AG04450 (cell line): ENCODE measurements at regions of chr7 and their contacts with region 1.

Region 1: DNA sequence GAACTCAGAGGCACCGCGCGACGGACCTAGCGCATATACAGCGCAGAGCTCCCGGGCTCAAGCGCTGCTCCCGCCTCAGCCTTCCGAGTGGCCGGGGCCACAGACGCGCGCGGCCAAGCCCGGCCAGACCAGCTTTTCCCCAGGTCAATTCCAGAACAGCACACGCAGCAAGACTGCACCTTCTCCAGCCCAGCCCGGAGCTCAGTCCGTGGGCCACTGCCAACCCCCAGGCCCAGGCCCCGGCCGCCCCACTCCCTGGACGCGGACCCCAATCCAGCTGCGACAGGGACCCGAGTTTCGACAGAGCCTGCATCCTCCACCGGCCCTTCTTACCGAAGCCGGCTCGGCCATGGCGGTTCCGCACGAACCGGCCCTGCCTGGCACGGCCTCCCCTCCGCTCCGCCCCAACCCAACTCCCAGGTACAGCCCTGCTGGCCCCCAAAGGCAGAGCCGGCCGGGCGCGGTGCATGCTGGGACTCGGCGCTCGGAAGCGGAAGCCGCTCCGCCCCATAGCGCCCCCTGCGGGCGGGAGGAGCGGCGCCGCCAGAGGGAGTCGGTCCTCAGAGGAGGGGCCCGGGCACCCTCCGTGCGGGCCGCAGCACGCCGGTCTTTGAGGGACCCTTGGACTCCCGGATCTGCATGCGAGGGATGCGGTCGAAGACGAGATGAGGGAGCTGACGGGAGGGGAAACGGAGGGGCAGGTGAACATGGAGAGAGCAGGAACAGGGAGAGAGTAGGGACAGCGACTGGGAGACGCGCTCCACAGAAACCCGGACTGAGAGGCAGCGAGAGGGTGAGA is at the start of gene ZNF425:
- DNase-seq: peak; percentile 72
- H3K4me3 ChIP-seq: peak within 1 kb of the TSS; percentile 91
- H3K27ac ChIP-seq: peak within 1 kb of the TSS; percentile 82
- H3K27me3 ChIP-seq: no peaks in the 10 kb centered on the region
- CTCF ChIP-seq: peak; percentile 90
- polyA plus RNA-seq, gene ZNF425: 1.8 and 2.1 TPM in 2 replicates

Region 2: DNA sequence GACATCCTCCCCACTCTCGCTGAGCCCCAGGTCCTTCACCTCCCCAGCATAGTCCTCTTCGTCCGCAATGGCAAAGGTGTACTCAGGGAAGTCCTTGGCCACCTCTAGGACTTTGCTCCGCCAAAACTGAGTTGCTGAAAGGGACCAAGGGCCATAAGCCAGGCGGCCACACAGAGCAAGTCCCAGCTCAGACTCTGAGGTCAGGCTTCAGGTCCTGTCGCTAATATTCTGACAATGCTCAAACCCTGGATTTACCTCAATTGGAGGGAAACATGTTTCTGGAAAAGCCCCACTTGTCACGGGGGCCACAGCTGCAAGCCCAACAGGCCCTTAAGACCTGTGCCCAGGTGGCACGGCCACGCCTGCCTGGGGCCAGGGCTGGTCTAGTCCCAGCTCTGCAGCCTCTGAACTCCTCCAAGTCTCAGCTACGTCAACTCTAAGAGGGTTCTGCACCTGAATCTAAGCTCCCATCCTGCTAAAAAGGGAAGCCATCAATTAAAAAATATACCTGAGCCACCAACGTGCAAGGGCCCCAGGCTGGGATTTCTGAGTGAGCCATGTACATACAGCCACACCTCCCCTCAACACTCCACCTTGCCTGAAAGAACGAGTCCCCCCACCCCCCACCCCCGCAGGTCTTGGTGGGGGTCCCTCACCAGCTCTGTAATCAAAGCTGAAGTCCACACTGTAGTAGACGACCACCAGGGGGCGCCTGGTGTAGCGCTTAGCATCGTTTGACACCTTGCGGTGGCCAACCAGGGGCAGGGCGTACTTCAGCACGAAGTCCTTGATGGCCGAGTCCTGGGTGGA is 120.6 kb before region 1 on chr7:
- CTCF ChIA-PET with region 1: interaction called, 10 read pairs
- POLR2A ChIA-PET with region 1: interaction called, 3 read pairs
- DNase-seq: no peak
- H3K4me3 ChIP-seq: no peak overlapping the region
- H3K27ac ChIP-seq: no peak overlapping the region
- H3K27me3 ChIP-seq: no peaks in the 10 kb centered on the region
- CTCF ChIP-seq: peak; percentile 74

Region 3: DNA sequence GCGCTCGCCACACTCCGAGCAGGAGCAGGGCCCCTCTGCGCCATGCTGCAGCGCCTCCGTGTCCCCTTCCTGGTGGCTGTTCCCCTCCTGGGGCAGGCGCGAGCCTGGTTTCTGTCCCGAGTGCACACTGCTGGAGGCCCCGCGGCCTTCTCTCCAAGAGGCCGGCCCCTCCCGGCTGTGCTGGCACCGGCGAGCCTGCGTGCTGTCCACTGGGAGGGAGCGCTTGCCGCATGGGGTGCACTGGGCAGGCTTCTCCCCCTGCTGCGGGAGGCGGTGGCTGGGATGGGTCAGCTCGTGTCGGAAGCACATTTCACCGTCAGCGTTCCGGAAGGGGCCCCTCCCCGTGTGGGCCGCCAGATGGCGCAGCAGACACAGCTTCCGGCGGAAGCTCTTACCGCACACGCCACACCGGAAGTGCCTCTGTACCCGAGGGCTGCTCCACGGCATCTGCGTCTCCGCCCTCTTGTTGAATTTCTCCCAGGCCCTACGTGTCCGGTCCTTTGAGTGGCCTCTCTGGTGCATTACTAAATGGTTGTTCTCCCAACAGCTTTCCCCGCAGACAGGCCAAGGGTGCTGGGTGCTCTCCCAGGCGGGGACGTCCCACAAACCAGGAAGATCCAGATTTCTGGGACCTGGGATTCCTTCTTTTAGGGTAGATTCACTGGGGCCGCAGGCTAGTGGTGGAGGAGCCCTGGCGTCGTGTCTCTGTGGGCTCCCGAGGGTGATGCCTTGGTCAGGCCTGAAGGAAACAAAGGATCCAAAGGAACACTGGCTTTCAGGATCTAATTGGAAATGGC is 54.2 kb before region 1 on chr7:
- CTCF ChIA-PET with region 1: interaction called, 21 read pairs
- POLR2A ChIA-PET with region 1: no interaction called
- DNase-seq: no peak
- H3K4me3 ChIP-seq: no peak overlapping the region
- H3K27ac ChIP-seq: no peak overlapping the region
- H3K27me3 ChIP-seq: no peaks in the 10 kb centered on the region
- CTCF ChIP-seq: 0 out of 2 replicates have a peak, but pooled peaks have one; percentile 3

Region 4: GRCh38 chr7:149104749-149105148 is 21.3 kb before region 1 on chr7:
- CTCF ChIA-PET with region 1: interaction called, 13 read pairs
- POLR2A ChIA-PET with region 1: no interaction called
- DNase-seq: no peak
- H3K4me3 ChIP-seq: no peak overlapping the region
- H3K27ac ChIP-seq: no peak overlapping the region
- H3K27me3 ChIP-seq: no peaks in the 10 kb centered on the region
- CTCF ChIP-seq: no peak

Region 5: DNA sequence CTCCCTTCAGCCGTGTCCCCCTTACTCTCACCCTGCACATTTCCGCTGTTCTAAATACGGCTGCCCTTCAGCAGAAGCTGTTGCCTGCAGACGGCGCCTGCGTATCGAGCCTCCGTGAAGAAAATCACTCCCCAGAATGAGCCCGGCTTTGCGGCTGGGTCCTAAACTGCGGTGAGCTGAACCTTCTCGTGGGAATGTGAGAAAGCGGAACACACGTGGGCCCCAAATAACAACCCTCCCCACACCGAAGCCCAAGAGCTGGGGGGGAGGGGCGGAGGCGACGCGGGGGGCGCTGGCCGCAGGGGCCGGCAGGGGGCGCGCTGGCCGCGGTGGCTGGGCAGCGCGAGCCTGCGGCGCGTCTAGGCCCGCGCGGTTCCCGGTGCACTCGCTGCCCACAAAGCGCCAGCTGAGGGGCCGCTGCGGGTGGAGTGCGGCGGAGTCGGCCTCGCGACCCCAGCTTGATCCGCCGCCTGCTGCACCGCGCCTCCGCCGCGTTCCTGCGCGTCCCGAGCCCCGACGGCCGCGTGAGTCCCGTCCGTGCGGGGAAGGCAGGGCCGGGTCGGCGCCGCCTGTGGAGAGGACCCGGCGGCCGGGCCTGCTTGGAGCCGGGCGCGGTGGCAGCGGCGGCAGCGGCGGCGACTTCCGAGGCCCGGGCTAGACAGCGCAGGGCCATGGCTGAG is 21.1 kb after region 1 on chr7 and contains the start of gene ZNF398:
- CTCF ChIA-PET with region 1: interaction called, 41 read pairs
- POLR2A ChIA-PET with region 1: interaction called, 20 read pairs
- DNase-seq: no peak
- H3K4me3 ChIP-seq: peak within 1 kb of the TSS; percentile 79
- H3K27ac ChIP-seq: peak within 1 kb of the TSS; percentile 57
- H3K27me3 ChIP-seq: no peaks in the 10 kb centered on the region
- CTCF ChIP-seq: peak; percentile 32
- polyA plus RNA-seq, gene ZNF398: 6.6 and 6.8 TPM in 2 replicates